ENCODE measurements at regions of chr3 and their contacts with region 1.

Region 1: GRCh38 chr3:58305882-58306711 is at the starts of genes HTD2 and RPP14:
- DNase-seq: peak; percentile 94
- H3K4me3 ChIP-seq: peak within 1 kb of the TSS; percentile 93
- H3K27ac ChIP-seq: peak within 1 kb of the TSS; percentile 95
- H3K4me1 ChIP-seq: no peaks in the 10 kb centered on the region
- H3K27me3 ChIP-seq: no peaks in the 10 kb centered on the region
- CTCF ChIP-seq: peak; percentile 80
- total RNA-seq, gene HTD2: 9.0 and 9.6 TPM in 2 replicates
- total RNA-seq, gene RPP14: 17.4 and 18.2 TPM in 2 replicates

Region 2: GRCh38 chr3:58177747-58178527 is 128.2 kb before region 1 on chr3:
- CTCF ChIA-PET with region 1: interaction called, 4 read pairs
- POLR2A ChIA-PET with region 1: no interaction called
- intact Hi-C with region 1: loop called (anchors 5 kb)
- DNase-seq: peak; percentile 87
- H3K4me3 ChIP-seq: peak overlapping the region; percentile 29
- H3K27ac ChIP-seq: no peak overlapping the region
- H3K4me1 ChIP-seq: no peaks in the 10 kb centered on the region
- H3K27me3 ChIP-seq: no peaks in the 10 kb centered on the region
- CTCF ChIP-seq: peak; percentile 80

Region 3: DNA sequence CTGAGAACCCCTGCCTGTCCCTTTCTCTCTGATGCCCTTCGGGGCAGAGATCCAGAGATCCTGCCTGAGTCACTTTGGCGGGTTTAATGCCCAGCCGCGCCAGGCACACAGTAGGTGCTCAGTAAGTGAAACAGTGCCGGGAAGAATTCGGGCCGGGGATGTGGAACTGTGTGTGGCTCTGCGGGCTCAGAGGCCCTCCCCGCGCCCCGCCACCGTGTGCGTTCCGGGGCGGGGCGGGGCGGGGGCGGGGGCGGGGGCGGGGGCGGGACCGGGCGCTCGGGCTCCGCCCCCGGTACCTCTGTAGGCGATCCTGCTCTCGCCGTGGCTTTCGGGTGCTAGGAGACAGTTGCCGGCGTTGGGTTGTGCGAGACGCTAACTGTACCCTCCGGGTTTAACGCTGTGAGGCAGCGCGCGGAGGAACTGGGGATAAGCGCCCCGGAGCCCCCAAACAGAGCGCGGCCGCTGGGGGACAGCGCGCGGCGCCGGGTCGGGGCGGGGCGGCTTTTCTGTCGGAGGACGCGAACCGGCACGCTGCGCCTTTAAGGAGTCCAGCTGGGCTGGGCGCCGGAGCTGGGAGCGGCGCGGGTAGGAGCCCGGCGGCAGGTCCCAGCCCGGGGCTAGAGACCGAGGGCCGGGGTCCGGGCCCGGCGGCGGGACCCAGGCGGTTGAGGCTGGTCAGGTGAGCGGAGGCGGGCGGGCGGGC is 68.7 kb before region 1 on chr3 and contains the start of gene ABHD6:
- CTCF ChIA-PET with region 1: interaction called, 3 read pairs
- POLR2A ChIA-PET with region 1: no interaction called
- intact Hi-C with region 1: loop called (anchors 5 kb)
- DNase-seq: peak; percentile 81
- H3K4me3 ChIP-seq: peak within 1 kb of the TSS; percentile 92
- H3K27ac ChIP-seq: peak within 1 kb of the TSS; percentile 98
- H3K4me1 ChIP-seq: peaks cover 32% of the 10 kb centered on the region
- H3K27me3 ChIP-seq: no peaks in the 10 kb centered on the region
- CTCF ChIP-seq: no peak
- total RNA-seq, gene ABHD6: 154 and 155 TPM in 2 replicates

Region 4: GRCh38 chr3:58526515-58526957 is 220.4 kb after region 1 on chr3:
- CTCF ChIA-PET with region 1: no interaction called
- POLR2A ChIA-PET with region 1: no interaction called
- intact Hi-C with region 1: loop called (anchors 5 kb)
- DNase-seq: peak; percentile 87
- H3K4me3 ChIP-seq: no peak overlapping the region
- H3K27ac ChIP-seq: no peak overlapping the region
- H3K4me1 ChIP-seq: peaks cover 24% of the 10 kb centered on the region
- H3K27me3 ChIP-seq: no peaks in the 10 kb centered on the region
- CTCF ChIP-seq: no peak

Region 5: GRCh38 chr3:58630076-58630709 is 324.1 kb after region 1 on chr3:
- CTCF ChIA-PET with region 1: interaction called, 3 read pairs
- POLR2A ChIA-PET with region 1: no interaction called
- intact Hi-C with region 1: loop called (anchors 5 kb)
- DNase-seq: peak; percentile 62
- H3K4me3 ChIP-seq: no peak overlapping the region
- H3K27ac ChIP-seq: no peak overlapping the region
- H3K4me1 ChIP-seq: peaks cover 16% of the 10 kb centered on the region
- H3K27me3 ChIP-seq: no peaks in the 10 kb centered on the region
- CTCF ChIP-seq: peak; percentile 70

Region 6: GRCh38 chr3:58722561-58722960 is 416.5 kb after region 1 on chr3:
- CTCF ChIA-PET with region 1: no interaction called
- POLR2A ChIA-PET with region 1: no interaction called
- intact Hi-C with region 1: no loop called
- DNase-seq: no peak
- H3K4me3 ChIP-seq: no peak overlapping the region
- H3K27ac ChIP-seq: no peak overlapping the region
- H3K4me1 ChIP-seq: no peaks in the 10 kb centered on the region
- H3K27me3 ChIP-seq: no peaks in the 10 kb centered on the region
- CTCF ChIP-seq: no peak